CD4-positive, alpha-beta T cell (primary cell): ENCODE measurements at regions of chr6 and their contacts with region 1.

Region 1: DNA sequence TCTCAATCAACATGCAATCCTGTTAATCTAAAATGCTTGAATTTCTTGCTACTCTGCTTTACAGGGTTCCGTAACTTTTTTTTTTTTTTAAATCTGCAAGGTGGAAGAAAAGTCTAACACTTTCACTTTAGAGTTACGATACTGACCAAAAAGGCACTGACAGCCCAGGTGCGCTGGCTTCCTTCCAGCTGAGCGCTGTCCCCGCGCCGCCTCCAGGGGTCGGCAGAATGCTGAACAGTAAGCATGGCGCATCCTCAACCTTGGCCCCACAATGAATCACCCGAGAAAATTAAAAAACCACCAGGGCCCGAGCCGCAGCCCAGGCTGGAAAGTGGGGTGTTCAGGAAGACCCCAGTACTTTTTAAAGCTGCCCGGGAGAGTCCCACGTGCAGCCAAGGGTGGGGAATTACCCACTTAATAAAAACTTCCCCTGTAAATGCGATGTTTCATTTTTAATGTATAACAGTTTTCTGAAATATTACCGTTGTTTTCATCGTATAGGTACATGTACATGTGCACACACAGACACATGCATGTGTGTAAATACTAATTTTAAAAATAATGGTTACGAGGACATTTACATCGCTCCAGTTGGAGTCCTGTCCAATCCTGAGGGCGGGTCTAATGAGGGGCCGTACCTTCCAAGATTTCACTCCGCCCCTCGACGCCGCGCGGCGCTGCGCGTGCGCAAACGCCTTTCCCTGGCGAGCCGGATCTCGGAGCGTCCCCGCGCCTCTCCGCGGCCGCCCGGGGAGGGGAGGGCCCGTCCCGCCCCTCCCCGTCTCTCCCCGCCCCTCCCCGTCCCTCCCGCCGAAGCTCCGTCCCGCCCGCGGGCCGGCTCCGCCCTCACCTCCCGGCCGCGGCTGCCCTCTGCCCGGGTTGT is at the start of gene GINM1:
- DNase-seq: peak; percentile 88 to 97 (median 95)
- ATAC-seq: peak; percentile 83
- H3K4me3 ChIP-seq: peak within 1 kb of the TSS; percentile 92
- H3K4me3 Mint-ChIP-seq: peak within 1 kb of the TSS; percentile 99
- H3K27ac ChIP-seq: peak within 1 kb of the TSS; percentile 67 to 92
- H3K27ac Mint-ChIP-seq: peak within 1 kb of the TSS; percentile 94
- H3K4me1 ChIP-seq: peaks cover 22% of the 10 kb centered on the region
- H3K4me1 Mint-ChIP-seq: peaks cover 29% of the 10 kb centered on the region
- H3K27me3 ChIP-seq: no peaks in the 10 kb centered on the region
- H3K27me3 Mint-ChIP-seq: no peaks in the 10 kb centered on the region
- CTCF ChIP-seq: peak; percentile 88
- total RNA-seq, gene GINM1: 24.1 to 25.9 TPM

Region 2: DNA sequence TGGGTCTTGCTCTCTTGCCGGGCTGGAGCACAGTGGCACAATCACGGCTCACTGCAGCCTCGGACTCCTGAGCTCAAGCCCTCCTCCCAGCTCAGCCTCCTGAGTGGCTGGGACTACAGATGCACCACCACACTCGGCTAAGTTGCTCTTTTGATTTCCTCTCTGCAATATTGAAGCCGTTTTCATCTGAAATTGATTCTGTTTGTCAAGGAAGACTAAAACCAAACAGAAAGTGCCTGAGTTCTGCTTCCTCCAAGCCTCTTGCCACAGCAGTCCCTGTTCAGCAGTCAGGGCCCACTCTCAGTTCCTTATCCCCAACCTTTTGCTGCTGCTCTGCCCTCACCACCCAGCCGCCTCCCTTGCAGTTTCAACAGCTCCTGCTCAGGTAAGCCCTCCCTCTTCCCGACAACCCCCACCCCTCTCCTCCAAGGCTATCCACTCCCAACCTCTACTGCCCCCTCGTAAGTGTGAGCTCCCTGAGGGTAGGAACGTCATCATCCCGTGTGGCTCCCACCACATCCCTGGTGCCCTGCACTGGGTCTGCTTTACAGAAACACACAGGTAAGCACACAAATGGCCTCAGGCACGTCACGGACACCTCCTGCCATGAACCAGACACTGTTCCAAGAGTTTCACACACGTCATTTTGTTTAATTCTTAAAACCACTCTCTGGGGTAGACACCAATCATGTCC is 318.9 kb before region 1 on chr6:
- CTCF ChIA-PET with region 1: no interaction called
- POLR2A ChIA-PET with region 1: no interaction called
- intact Hi-C with region 1: no loop called
- DNase-seq: peak in 2 of 14 experiments; percentile 29 to 34
- ATAC-seq: no peak
- H3K4me3 ChIP-seq: no peak overlapping the region
- H3K4me3 Mint-ChIP-seq: no peak overlapping the region
- H3K27ac ChIP-seq: no peak overlapping the region
- H3K27ac Mint-ChIP-seq: no peak overlapping the region
- H3K4me1 ChIP-seq: peaks cover 22% of the 10 kb centered on the region
- H3K4me1 Mint-ChIP-seq: peaks cover 33% of the 10 kb centered on the region
- H3K27me3 ChIP-seq: no peaks in the 10 kb centered on the region
- H3K27me3 Mint-ChIP-seq: no peaks in the 10 kb centered on the region
- CTCF ChIP-seq: no peak

Region 3: DNA sequence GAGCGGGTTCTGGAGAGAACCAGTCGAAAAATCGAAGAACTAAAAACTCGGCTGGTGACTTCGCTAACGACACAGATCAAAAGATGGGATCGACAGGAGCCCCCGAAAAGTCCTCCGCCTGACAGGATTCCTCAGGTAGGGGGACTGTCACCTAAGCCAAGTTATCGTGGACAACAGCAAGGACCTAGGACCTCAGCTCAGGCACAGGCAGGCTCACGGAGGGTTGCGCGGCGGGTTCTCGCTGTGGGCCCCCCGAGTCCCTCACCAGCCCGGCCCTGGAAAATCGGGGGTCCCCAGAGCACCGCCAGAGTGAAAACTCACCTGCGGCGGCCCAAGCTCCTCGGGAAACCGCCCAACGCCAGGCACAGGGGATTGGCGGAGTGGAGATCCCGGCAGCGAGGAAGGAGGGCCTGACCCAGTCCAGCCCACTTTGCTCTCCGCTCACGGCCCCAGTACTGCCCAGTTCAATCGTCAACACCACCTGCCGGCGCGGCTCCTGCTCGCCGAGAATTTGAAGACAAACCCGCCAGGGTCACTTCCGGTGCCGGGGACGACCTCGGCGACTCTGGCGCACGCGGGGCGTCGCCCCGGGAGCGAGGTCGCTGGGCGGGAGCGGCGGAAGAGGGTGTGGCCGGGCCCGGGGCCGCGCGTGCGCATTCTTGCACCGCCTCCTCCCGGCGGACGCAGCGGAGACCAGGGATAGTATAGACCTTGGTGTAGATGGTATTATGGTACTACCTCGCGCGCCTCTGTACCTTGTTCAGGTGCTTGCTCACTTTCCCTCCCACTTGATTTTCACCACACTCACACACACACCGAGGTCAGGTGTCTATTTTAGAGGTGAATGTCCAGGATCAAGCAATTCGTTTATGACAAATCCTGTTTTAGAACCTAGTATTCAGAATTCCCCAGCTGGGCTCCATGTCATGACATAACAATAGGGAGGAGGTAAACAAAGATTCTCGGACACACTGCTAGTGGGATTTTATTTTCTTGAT is 82.7 kb after region 1 on chr6 and contains the start of gene KATNA1:
- CTCF ChIA-PET with region 1: interaction called, 3 read pairs
- POLR2A ChIA-PET with region 1: interaction called, 6 read pairs
- intact Hi-C with region 1: loop called (anchors 5 kb)
- DNase-seq: peak; percentile 69 to 93 (median 82)
- ATAC-seq: peak; percentile 88
- H3K4me3 ChIP-seq: peak within 1 kb of the TSS; percentile 100
- H3K4me3 Mint-ChIP-seq: peak within 1 kb of the TSS; percentile 90
- H3K27ac ChIP-seq: peak within 1 kb of the TSS; percentile 66 to 85
- H3K27ac Mint-ChIP-seq: peak within 1 kb of the TSS; percentile 84
- H3K4me1 ChIP-seq: peaks cover 13% of the 10 kb centered on the region
- H3K4me1 Mint-ChIP-seq: peaks cover 41% of the 10 kb centered on the region
- H3K27me3 ChIP-seq: no peaks in the 10 kb centered on the region
- H3K27me3 Mint-ChIP-seq: no peaks in the 10 kb centered on the region
- CTCF ChIP-seq: no peak
- total RNA-seq, gene KATNA1: 17.0 to 18.1 TPM

Region 4: GRCh38 chr6:149717588-149718458 is 152.1 kb after region 1 on chr6 and contains the start of gene LATS1:
- CTCF ChIA-PET with region 1: no interaction called
- POLR2A ChIA-PET with region 1: interaction called, 13 read pairs
- intact Hi-C with region 1: loop called in 1 of 2 experiments (anchors 5 kb)
- DNase-seq: peak; percentile 85 to 94 (median 89)
- ATAC-seq: peak; percentile 87
- H3K4me3 ChIP-seq: peak within 1 kb of the TSS; percentile 84
- H3K4me3 Mint-ChIP-seq: peak within 1 kb of the TSS; percentile 100
- H3K27ac ChIP-seq: peak within 1 kb of the TSS; percentile 92 to 95
- H3K27ac Mint-ChIP-seq: peak within 1 kb of the TSS; percentile 99
- H3K4me1 ChIP-seq: peaks cover 21% of the 10 kb centered on the region
- H3K4me1 Mint-ChIP-seq: peaks cover 47% of the 10 kb centered on the region
- H3K27me3 ChIP-seq: no peaks in the 10 kb centered on the region
- H3K27me3 Mint-ChIP-seq: no peaks in the 10 kb centered on the region
- CTCF ChIP-seq: no peak
- total RNA-seq, gene LATS1: 36.1 to 39.6 TPM

Region 5: DNA sequence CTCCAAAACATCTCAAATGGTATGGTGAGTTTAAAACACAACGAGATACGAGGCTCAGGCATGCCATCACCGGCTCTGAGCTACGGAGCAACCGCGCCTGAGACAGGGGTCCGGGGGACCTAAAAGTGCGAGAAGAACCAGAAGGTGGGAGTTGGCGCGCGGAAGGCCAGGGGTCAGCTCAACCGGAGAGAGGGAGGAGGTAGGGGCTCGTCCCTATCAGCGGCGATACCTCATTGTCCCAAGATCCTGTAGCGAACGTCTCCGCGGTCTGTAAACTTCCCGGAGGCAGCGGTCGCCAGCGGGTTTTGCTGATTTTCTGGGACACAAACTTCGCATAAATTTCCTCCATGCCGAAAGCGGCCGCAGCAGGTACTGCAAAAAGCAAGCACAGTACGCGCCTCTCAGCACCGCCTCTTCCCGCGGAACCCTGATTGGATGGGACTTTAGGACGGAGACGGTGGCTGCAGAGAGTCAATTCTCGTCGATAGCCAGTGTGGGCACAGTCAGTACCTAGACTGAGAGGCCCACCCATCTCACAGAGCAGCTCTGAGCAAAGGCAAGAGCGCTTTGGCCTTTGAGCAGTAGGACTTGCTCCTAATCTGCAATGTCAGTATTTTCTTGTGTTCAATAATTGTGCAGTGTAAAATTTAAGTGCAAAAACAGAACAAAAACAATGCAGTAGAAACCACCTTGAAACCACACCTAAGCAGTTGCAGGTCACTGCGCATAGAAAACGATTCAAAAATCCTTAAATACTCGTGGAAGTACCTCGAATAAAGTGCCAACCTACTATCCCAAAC is 180.6 kb after region 1 on chr6 and contains the start of gene NUP43:
- CTCF ChIA-PET with region 1: interaction called, 4 read pairs
- POLR2A ChIA-PET with region 1: interaction called, 4 read pairs
- intact Hi-C with region 1: loop called in 1 of 2 experiments (anchors 5 kb)
- DNase-seq: peak; percentile 86 to 95 (median 91)
- ATAC-seq: peak; percentile 74
- H3K4me3 ChIP-seq: peak within 1 kb of the TSS; percentile 95
- H3K4me3 Mint-ChIP-seq: peak within 1 kb of the TSS; percentile 97
- H3K27ac ChIP-seq: peak within 1 kb of the TSS; percentile 59 to 65
- H3K27ac Mint-ChIP-seq: peak within 1 kb of the TSS; percentile 96
- H3K4me1 ChIP-seq: peaks cover 38% of the 10 kb centered on the region
- H3K4me1 Mint-ChIP-seq: peaks cover 32% of the 10 kb centered on the region
- H3K27me3 ChIP-seq: no peaks in the 10 kb centered on the region
- H3K27me3 Mint-ChIP-seq: no peaks in the 10 kb centered on the region
- CTCF ChIP-seq: peak; percentile 67
- total RNA-seq, gene NUP43: 14.2 to 14.5 TPM

Region 6: GRCh38 chr6:149863697-149864577 is 298.2 kb after region 1 on chr6 and contains the start of gene LRP11:
- CTCF ChIA-PET with region 1: no interaction called
- POLR2A ChIA-PET with region 1: no interaction called
- intact Hi-C with region 1: loop called in 1 of 2 experiments (anchors 5 kb)
- DNase-seq: peak; percentile 66 to 91 (median 80)
- ATAC-seq: peak; percentile 87
- H3K4me3 ChIP-seq: peak within 1 kb of the TSS; percentile 54
- H3K4me3 Mint-ChIP-seq: peak within 1 kb of the TSS; percentile 86
- H3K27ac ChIP-seq: no peak within 1 kb of the TSS
- H3K27ac Mint-ChIP-seq: peak within 1 kb of the TSS; percentile 68
- H3K4me1 ChIP-seq: peaks cover 18% of the 10 kb centered on the region
- H3K4me1 Mint-ChIP-seq: peaks cover 5% of the 10 kb centered on the region
- H3K27me3 ChIP-seq: peaks cover 0 to 3% of the 10 kb centered on the region in 2 experiments
- H3K27me3 Mint-ChIP-seq: peaks cover 22% of the 10 kb centered on the region
- CTCF ChIP-seq: no peak
- total RNA-seq, gene LRP11: 0.75 to 0.99 TPM

Region 7: GRCh38 chr6:149925974-149926777 is 360.4 kb after region 1 on chr6:
- CTCF ChIA-PET with region 1: no interaction called
- POLR2A ChIA-PET with region 1: no interaction called
- intact Hi-C with region 1: loop called in 1 of 2 experiments (anchors 5 kb)
- DNase-seq: peak; percentile 48 to 81 (median 64)
- ATAC-seq: peak; percentile 66
- H3K4me3 ChIP-seq: peak overlapping the region; percentile 22
- H3K4me3 Mint-ChIP-seq: no peak overlapping the region
- H3K27ac ChIP-seq: no peak overlapping the region
- H3K27ac Mint-ChIP-seq: no peak overlapping the region
- H3K4me1 ChIP-seq: peaks cover 31% of the 10 kb centered on the region
- H3K4me1 Mint-ChIP-seq: peaks cover 27% of the 10 kb centered on the region
- H3K27me3 ChIP-seq: peaks cover 61 to 83% of the 10 kb centered on the region in 2 experiments
- H3K27me3 Mint-ChIP-seq: peaks cover 93% of the 10 kb centered on the region
- CTCF ChIP-seq: peak; percentile 60

Region 8: DNA sequence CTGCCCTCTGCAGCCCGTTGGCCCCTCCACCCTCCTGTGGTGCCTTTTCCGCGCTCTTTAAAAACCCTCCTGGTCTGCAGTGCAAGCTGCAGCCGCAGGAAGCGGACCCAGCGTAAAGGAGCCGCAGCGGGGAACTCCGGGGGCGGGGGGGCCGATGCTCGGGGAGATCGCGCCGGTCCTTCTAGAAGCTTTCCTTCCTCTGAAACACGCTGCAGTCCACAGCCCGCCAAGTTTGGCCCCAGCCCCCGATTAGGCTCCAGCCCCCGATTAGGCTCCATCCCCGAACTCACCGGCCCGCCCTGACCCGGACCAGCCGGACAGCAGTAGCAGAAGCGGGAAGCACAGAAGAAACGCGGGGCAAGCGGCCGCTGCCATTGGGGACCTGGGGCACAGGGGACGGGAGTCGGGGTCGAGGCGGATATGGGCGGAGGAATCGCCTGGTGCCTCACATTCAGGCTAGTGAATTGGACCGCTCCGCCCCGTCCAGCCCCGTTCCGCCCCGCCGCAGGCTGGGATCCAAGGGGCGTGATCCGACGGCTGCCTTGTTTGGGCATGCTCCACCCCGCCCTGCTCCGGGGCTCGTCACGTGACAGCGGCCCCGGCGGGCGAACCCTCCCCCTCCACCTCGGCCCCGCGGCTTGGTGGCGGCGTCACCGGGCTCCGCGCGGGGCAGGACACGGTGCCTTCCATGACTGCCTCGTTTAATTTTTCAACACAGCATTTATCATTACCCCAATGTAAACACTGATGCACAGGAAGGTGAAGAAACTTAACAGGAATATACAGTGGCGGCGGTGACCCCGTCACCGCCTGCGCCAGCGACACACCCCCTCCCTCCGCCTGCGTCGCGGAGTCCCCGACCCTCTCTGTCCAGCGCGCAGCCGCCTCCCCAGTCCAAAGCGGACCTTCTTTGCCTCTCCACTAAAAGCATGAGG is 439.3 kb after region 1 on chr6:
- CTCF ChIA-PET with region 1: no interaction called
- POLR2A ChIA-PET with region 1: no interaction called
- intact Hi-C with region 1: loop called in 1 of 2 experiments (anchors 10 kb)
- DNase-seq: peak; percentile 65 to 95 (median 86)
- ATAC-seq: peak; percentile 77
- H3K4me3 ChIP-seq: peak overlapping the region; percentile 86
- H3K4me3 Mint-ChIP-seq: peak overlapping the region; percentile 87
- H3K27ac ChIP-seq: peak overlapping the region; percentile 75 to 89
- H3K27ac Mint-ChIP-seq: peak overlapping the region; percentile 74
- H3K4me1 ChIP-seq: peaks cover 49% of the 10 kb centered on the region
- H3K4me1 Mint-ChIP-seq: peaks cover 29% of the 10 kb centered on the region
- H3K27me3 ChIP-seq: peaks cover 6 to 15% of the 10 kb centered on the region in 2 experiments
- H3K27me3 Mint-ChIP-seq: peaks cover 24% of the 10 kb centered on the region
- CTCF ChIP-seq: no peak

Region 9: GRCh38 chr6:150310539-150310938 is 744.8 kb after region 1 on chr6:
- CTCF ChIA-PET with region 1: no interaction called
- POLR2A ChIA-PET with region 1: no interaction called
- intact Hi-C with region 1: no loop called
- DNase-seq: peak in 3 of 14 experiments; percentile 18 to 42 (median 24)
- ATAC-seq: peak; percentile 43
- H3K4me3 ChIP-seq: no peak overlapping the region
- H3K4me3 Mint-ChIP-seq: no peak overlapping the region
- H3K27ac ChIP-seq: no peak overlapping the region
- H3K27ac Mint-ChIP-seq: peak overlapping the region; percentile 55
- H3K4me1 ChIP-seq: peaks cover 20% of the 10 kb centered on the region
- H3K4me1 Mint-ChIP-seq: no peaks in the 10 kb centered on the region
- H3K27me3 ChIP-seq: peaks cover 0 to 9% of the 10 kb centered on the region in 2 experiments
- H3K27me3 Mint-ChIP-seq: peaks cover 10% of the 10 kb centered on the region
- CTCF ChIP-seq: no peak

Region 10: GRCh38 chr6:151014404-151015100 is 1448.8 kb after region 1 on chr6:
- CTCF ChIA-PET with region 1: no interaction called
- POLR2A ChIA-PET with region 1: no interaction called
- intact Hi-C with region 1: no loop called
- DNase-seq: peak; percentile 32 to 79 (median 42)
- ATAC-seq: peak; percentile 60
- H3K4me3 ChIP-seq: no peak overlapping the region
- H3K4me3 Mint-ChIP-seq: peak overlapping the region; percentile 6
- H3K27ac ChIP-seq: no peak overlapping the region
- H3K27ac Mint-ChIP-seq: no peak overlapping the region
- H3K4me1 ChIP-seq: peaks cover 2% of the 10 kb centered on the region
- H3K4me1 Mint-ChIP-seq: peaks cover 4% of the 10 kb centered on the region
- H3K27me3 ChIP-seq: no peaks in the 10 kb centered on the region
- H3K27me3 Mint-ChIP-seq: no peaks in the 10 kb centered on the region
- CTCF ChIP-seq: peak; percentile 98